ENCODE measurements at regions of chr2 and their contacts with region 1.

Region 1: GRCh38 chr2:65974067-65974723 is 460.7 kb upstream of the MEIS1 start:
- DNase-seq: no peak
- ATAC-seq: no peak
- H3K4me3 ChIP-seq: no peak overlapping the region
- H3K27ac ChIP-seq: no peak overlapping the region
- H3K4me1 ChIP-seq: no peaks in the 10 kb centered on the region
- H3K27me3 ChIP-seq: peaks cover 0 to 5% (median 0%) of the 10 kb centered on the region in 9 donors
- CTCF ChIP-seq: no peak
- POLR2A ChIP-seq: no peak

Region 2: GRCh38 chr2:65957886-65958285 is 16.3 kb before region 1 on chr2:
- intact Hi-C with region 1: loop called in 2 of 10 experiments (anchors 1 to 2 kb)
- DNase-seq: no peak
- ATAC-seq: no peak
- H3K4me3 ChIP-seq: no peak overlapping the region
- H3K27ac ChIP-seq: no peak overlapping the region
- H3K4me1 ChIP-seq: no peaks in the 10 kb centered on the region
- H3K27me3 ChIP-seq: no peaks in the 10 kb centered on the region
- CTCF ChIP-seq: no peak
- POLR2A ChIP-seq: no peak

Region 3: GRCh38 chr2:66030553-66030952 is 56.4 kb after region 1 on chr2:
- intact Hi-C with region 1: loop called in 1 of 10 experiments (anchors 10 kb)
- DNase-seq: no peak
- ATAC-seq: no peak
- H3K4me3 ChIP-seq: no peak overlapping the region
- H3K27ac ChIP-seq: no peak overlapping the region
- H3K4me1 ChIP-seq: no peaks in the 10 kb centered on the region
- H3K27me3 ChIP-seq: no peaks in the 10 kb centered on the region
- CTCF ChIP-seq: no peak
- POLR2A ChIP-seq: no peak